CD8-positive, alpha-beta T cell (primary cell): ENCODE measurements at regions of chr1 and their contacts with region 1.

Region 1: DNA sequence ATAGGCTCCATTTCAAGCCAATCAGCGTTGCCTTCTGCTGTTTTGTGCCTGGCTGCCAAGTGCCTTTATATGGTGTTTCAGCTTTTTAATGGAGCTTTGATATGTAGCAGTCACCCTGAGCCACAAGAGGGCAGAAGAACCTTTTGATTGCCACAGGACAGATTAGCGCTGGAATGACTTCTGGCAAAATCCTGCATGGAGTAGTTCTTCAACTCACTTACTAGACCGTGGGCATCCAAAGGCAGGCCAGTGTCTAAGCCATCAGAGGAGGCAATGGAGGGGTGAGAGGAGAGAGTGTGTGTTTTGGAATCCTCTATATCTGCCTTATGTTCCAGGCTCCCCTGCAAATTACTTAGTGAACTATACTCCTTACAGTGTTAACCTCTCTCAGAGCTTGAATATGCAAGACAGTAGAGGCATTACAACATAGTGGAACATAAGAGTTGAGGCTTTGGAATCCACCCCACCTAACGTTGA is 56.2 kb downstream of the ST3GAL3 start:
- DNase-seq: peak in 8 of 9 experiments; percentile 3 to 72 (median 41)
- ATAC-seq: peak; percentile 81
- H3K4me3 ChIP-seq: no peak overlapping the region
- H3K4me3 Mint-ChIP-seq: no peak overlapping the region
- H3K27ac ChIP-seq: no peak overlapping the region
- H3K27ac Mint-ChIP-seq: no peak overlapping the region
- H3K4me1 ChIP-seq: no peaks in the 10 kb centered on the region
- H3K4me1 Mint-ChIP-seq: peaks cover 4% of the 10 kb centered on the region
- H3K27me3 ChIP-seq: no peaks in the 10 kb centered on the region
- H3K27me3 Mint-ChIP-seq: no peaks in the 10 kb centered on the region
- CTCF ChIP-seq: peak; percentile 75

Region 2: GRCh38 chr1:43753422-43753821 is 10.1 kb before region 1 on chr1:
- CTCF ChIA-PET with region 1: interaction called, 15 read pairs
- POLR2A ChIA-PET with region 1: no interaction called
- intact Hi-C with region 1: no loop called
- DNase-seq: no peak
- ATAC-seq: no peak
- H3K4me3 ChIP-seq: no peak overlapping the region
- H3K4me3 Mint-ChIP-seq: no peak overlapping the region
- H3K27ac ChIP-seq: no peak overlapping the region
- H3K27ac Mint-ChIP-seq: no peak overlapping the region
- H3K4me1 ChIP-seq: no peaks in the 10 kb centered on the region
- H3K4me1 Mint-ChIP-seq: no peaks in the 10 kb centered on the region
- H3K27me3 ChIP-seq: no peaks in the 10 kb centered on the region
- H3K27me3 Mint-ChIP-seq: no peaks in the 10 kb centered on the region
- CTCF ChIP-seq: no peak

Region 3: GRCh38 chr1:43774359-43774758 is 10.8 kb after region 1 on chr1:
- CTCF ChIA-PET with region 1: interaction called, 13 read pairs
- POLR2A ChIA-PET with region 1: no interaction called
- intact Hi-C with region 1: no loop called
- DNase-seq: no peak
- ATAC-seq: no peak
- H3K4me3 ChIP-seq: no peak overlapping the region
- H3K4me3 Mint-ChIP-seq: no peak overlapping the region
- H3K27ac ChIP-seq: no peak overlapping the region
- H3K27ac Mint-ChIP-seq: no peak overlapping the region
- H3K4me1 ChIP-seq: no peaks in the 10 kb centered on the region
- H3K4me1 Mint-ChIP-seq: peaks cover 1% of the 10 kb centered on the region
- H3K27me3 ChIP-seq: no peaks in the 10 kb centered on the region
- H3K27me3 Mint-ChIP-seq: no peaks in the 10 kb centered on the region
- CTCF ChIP-seq: no peak

Region 4: GRCh38 chr1:43934101-43934985 is 170.8 kb after region 1 on chr1:
- CTCF ChIA-PET with region 1: interaction called, 107 read pairs
- POLR2A ChIA-PET with region 1: interaction called, 6 read pairs
- intact Hi-C with region 1: loop called (anchors 1 kb)
- DNase-seq: peak; percentile 24 to 68 (median 50)
- ATAC-seq: peak; percentile 69
- H3K4me3 ChIP-seq: no peak overlapping the region
- H3K4me3 Mint-ChIP-seq: no peak overlapping the region
- H3K27ac ChIP-seq: no peak overlapping the region
- H3K27ac Mint-ChIP-seq: no peak overlapping the region
- H3K4me1 ChIP-seq: peaks cover 14% of the 10 kb centered on the region
- H3K4me1 Mint-ChIP-seq: peaks cover 15% of the 10 kb centered on the region
- H3K27me3 ChIP-seq: peaks cover 23 to 27% of the 10 kb centered on the region in 2 experiments
- H3K27me3 Mint-ChIP-seq: peaks cover 29% of the 10 kb centered on the region
- CTCF ChIP-seq: peak; percentile 65